Caco-2 (cell line): ENCODE measurements at regions of chr7 and their contacts with region 1.

Region 1: GRCh38 chr7:77536413-77537135 is 521 bp upstream of the PTPN12 start:
- DNase-seq: peak; percentile 98 to 99
- H3K4me3 ChIP-seq: peak overlapping the region; percentile 56
- H3K4me3 Mint-ChIP-seq: peak overlapping the region; percentile 88
- H3K27ac Mint-ChIP-seq: peak overlapping the region; percentile 94
- H3K4me1 ChIP-seq: peaks cover 12% of the 10 kb centered on the region; the same call in 1 of the 2 replicates
- H3K4me1 Mint-ChIP-seq: peaks cover 12% of the 10 kb centered on the region
- H3K27me3 ChIP-seq: no peaks in the 10 kb centered on the region
- H3K27me3 Mint-ChIP-seq: no peaks in the 10 kb centered on the region
- CTCF ChIP-seq: no peak

Region 2: DNA sequence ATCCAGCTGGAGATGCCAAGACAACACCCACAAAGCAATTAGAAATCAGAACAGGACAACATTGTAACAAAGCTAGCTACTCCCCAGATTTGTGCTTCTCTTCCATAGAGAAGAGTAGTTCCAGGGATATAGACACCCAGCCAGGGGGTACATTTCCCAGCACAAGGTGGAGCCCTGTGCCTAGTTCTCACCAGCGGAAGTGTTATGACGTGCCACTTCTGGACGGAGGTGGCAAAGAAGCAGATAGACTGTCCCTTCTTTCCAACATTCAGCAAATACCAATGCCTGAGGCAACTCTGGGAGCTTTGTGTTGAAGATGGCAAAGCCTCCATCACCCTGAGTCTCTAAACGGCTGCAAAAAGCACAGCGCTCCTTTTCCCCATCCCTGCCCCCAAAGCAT is 97.0 kb before region 1 on chr7:
- CTCF ChIA-PET with region 1: no interaction called
- POLR2A ChIA-PET with region 1: no interaction called
- intact Hi-C with region 1: loop called (anchors 2 kb)
- DNase-seq: peak; percentile 74 to 77
- H3K4me3 ChIP-seq: no peak overlapping the region
- H3K4me3 Mint-ChIP-seq: no peak overlapping the region
- H3K27ac Mint-ChIP-seq: no peak overlapping the region
- H3K4me1 ChIP-seq: 0 out of 2 replicates have a peak, but pooled peaks cover 4% of the 10 kb centered on the region
- H3K4me1 Mint-ChIP-seq: peaks cover 12% of the 10 kb centered on the region
- H3K27me3 ChIP-seq: no peaks in the 10 kb centered on the region
- H3K27me3 Mint-ChIP-seq: no peaks in the 10 kb centered on the region
- CTCF ChIP-seq: peak; percentile 64 to 65

Region 3: GRCh38 chr7:77460057-77460486 is 76.5 kb before region 1 on chr7:
- CTCF ChIA-PET with region 1: interaction called, 3 read pairs
- POLR2A ChIA-PET with region 1: no interaction called
- intact Hi-C with region 1: loop called (anchors 1 kb)
- DNase-seq: peak; percentile 53 to 62
- H3K4me3 ChIP-seq: no peak overlapping the region
- H3K4me3 Mint-ChIP-seq: no peak overlapping the region
- H3K27ac Mint-ChIP-seq: no peak overlapping the region
- H3K4me1 ChIP-seq: peaks cover 34% of the 10 kb centered on the region
- H3K4me1 Mint-ChIP-seq: peaks cover 25% of the 10 kb centered on the region
- H3K27me3 ChIP-seq: no peaks in the 10 kb centered on the region
- H3K27me3 Mint-ChIP-seq: no peaks in the 10 kb centered on the region
- CTCF ChIP-seq: peak; percentile 36 to 56

Region 4: GRCh38 chr7:77481615-77482402 is 54.8 kb before region 1 on chr7:
- CTCF ChIA-PET with region 1: no interaction called
- POLR2A ChIA-PET with region 1: interaction called, 11 read pairs
- intact Hi-C with region 1: loop called (anchors 1 kb)
- DNase-seq: peak; percentile 78
- H3K4me3 ChIP-seq: no peak overlapping the region
- H3K4me3 Mint-ChIP-seq: peak overlapping the region; percentile 20
- H3K27ac Mint-ChIP-seq: peak overlapping the region; percentile 94
- H3K4me1 ChIP-seq: peaks cover 37% of the 10 kb centered on the region
- H3K4me1 Mint-ChIP-seq: peaks cover 25% of the 10 kb centered on the region
- H3K27me3 ChIP-seq: no peaks in the 10 kb centered on the region
- H3K27me3 Mint-ChIP-seq: no peaks in the 10 kb centered on the region
- CTCF ChIP-seq: no peak

Region 5: GRCh38 chr7:77561352-77561751 is 24.8 kb after region 1 on chr7:
- CTCF ChIA-PET with region 1: interaction called, 3 read pairs
- POLR2A ChIA-PET with region 1: interaction called, 10 read pairs
- intact Hi-C with region 1: no loop called
- DNase-seq: no peak
- H3K4me3 ChIP-seq: no peak overlapping the region
- H3K4me3 Mint-ChIP-seq: no peak overlapping the region
- H3K27ac Mint-ChIP-seq: no peak overlapping the region
- H3K4me1 ChIP-seq: no peaks in the 10 kb centered on the region
- H3K4me1 Mint-ChIP-seq: peaks cover 20% of the 10 kb centered on the region
- H3K27me3 ChIP-seq: no peaks in the 10 kb centered on the region
- H3K27me3 Mint-ChIP-seq: no peaks in the 10 kb centered on the region
- CTCF ChIP-seq: no peak